GM10248 (cell line): ENCODE measurements at regions of chr15 and their contacts with region 1.

Region 1: DNA sequence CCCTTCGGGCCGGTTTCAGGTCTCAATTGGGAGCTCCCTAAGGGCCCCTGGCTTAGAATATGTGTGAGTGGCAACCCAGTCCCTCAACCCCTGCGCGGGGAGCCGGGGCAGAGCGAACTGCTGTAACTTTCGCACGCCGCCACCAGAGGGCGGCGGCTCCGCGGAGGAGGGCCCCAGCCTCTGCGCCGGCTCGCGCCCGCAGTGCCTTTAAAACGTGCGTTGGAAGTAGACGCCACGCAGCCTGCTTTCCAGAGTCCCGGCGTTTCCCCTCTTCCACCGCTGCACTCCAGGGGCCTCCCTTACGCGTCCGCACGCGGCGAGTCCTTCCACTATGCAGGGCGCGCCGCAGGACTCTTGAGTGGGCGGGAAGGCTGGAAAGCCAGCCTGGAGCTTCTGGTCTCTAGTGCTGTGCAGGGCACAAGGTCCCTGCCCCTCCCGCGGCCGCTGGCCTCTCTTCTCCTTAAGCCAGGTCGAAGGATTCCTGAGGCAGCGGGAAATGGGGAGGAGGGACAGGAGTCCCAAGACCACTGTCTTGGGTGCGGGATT is 23.7 kb upstream of the RNU6-1 start:
- DNase-seq: peak; percentile 87
- CTCF ChIP-seq: peak; percentile 83

Region 2: GRCh38 chr15:67839929-67840748 is 23.4 kb before region 1 on chr15 and contains the start of gene RNU6-1:
- CTCF ChIA-PET with region 1: interaction called, 13 read pairs
- POLR2A ChIA-PET with region 1: no interaction called
- DNase-seq: peak; percentile 91
- CTCF ChIP-seq: no peak

Region 3: DNA sequence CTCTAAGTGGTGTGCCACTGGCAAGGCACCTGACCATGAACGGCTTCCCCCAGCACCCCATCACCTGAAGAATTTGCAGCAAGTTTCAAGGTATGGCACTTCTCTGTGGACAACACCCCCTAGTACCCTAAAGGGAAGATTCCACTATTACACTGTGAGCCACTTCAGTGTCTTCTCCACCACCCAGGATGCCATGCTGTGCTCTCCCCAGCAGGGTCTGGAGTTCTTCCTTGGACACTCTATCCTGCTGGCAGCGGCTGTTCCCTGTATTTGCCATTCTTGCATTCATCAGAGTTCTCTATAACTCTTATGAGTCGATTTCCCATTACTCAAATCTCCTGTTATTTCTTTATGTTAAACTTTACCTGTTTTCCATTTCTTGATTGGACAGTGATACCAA is 10.3 kb after region 1 on chr15:
- CTCF ChIA-PET with region 1: interaction called, 12 read pairs
- POLR2A ChIA-PET with region 1: no interaction called
- DNase-seq: no peak
- CTCF ChIP-seq: no peak

Region 4: GRCh38 chr15:68053701-68054627 is 190.4 kb after region 1 on chr15 and contains the start of gene PIAS1:
- CTCF ChIA-PET with region 1: interaction called, 10 read pairs
- POLR2A ChIA-PET with region 1: no interaction called
- DNase-seq: peak; percentile 98
- CTCF ChIP-seq: no peak

Region 5: DNA sequence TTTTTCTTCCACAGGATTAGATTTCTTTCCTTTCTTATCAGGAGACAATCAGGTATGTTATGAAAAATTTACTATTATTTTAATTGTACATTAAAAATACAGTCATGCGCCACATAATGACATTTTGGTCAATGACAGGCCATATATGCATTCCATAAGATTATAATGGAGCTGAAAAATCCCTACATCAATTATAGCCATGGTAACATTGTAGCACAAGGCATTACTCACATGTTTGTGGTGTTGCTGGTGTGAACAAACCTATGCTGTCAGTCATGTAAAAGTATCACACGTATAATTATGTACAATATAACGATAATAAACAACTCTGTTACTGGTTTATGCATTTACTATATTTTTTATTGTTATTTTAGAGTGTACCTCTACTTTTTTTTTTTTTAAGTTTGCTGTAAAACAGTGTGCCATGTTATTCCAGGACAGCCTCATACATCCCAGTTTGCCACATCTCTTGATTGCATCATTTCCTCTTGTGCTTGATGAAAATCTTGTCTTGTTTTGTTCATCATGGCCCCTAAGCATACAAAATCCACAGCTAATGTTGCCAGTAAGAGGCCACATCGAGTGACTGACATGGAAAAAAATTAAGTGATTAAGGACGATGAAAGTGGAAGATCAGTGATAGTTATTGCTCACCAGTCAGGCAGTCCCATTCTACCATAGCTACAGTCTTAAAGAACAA is 320.3 kb after region 1 on chr15:
- CTCF ChIA-PET with region 1: interaction called, 10 read pairs
- POLR2A ChIA-PET with region 1: no interaction called
- DNase-seq: no peak
- CTCF ChIP-seq: no peak